ENCODE measurements at regions of chr18 and their contacts with region 1.

Region 1: GRCh38 chr18:3593904-3594661 is 144.1 kb downstream of the TGIF1 start:
- DNase-seq: peak; percentile 92
- ATAC-seq: peak; percentile 86
- H3K4me3 Mint-ChIP-seq: peak overlapping the region; percentile 82
- H3K27ac Mint-ChIP-seq: peak overlapping the region; percentile 94
- H3K4me1 Mint-ChIP-seq: peaks cover 35% of the 10 kb centered on the region
- H3K27me3 Mint-ChIP-seq: no peaks in the 10 kb centered on the region

Region 2: DNA sequence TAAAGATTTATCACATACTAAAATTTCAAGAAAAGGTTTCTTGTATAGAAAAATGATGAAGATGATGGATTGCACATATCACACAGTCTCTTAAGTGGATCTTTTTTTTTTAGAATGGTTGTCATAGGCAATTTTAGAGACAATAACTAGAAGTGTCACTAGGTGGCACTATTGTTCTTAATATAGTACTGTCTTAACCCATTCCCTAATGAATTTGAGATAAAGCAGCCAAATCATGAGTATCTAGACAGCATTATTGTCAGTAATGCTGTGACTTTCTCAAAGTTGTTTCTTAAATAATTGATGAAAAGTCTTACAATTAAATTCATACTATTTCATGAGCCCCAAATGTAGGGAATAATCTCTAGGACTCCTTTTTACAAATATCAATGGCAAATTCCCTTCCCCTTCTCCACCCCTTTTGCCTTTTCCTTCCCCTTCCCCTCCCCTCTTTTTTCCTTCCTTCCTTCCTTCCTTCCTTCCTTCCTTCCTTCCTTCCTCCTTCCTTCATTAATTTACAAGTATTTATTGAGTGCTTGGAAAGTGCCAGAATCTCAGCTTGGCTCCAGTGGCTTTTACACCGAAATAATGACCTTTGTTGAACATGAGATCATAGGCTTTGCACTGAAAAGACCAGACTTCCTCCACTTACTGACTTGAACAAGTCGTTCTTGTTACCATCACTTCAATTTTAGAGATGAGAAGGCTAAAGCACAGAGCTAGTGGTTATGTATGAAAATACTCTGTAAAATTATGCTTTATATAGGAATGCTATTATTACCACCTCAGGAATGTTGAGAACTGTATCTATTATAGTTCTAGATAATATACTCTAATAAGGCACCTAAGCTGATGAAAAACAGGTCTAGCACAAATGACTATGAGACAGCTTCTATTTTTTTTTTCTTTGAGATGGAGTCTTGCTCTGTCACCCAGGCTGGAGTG is 312.4 kb before region 1 on chr18:
- CTCF ChIA-PET with region 1: interaction called, 13 read pairs
- DNase-seq: no peak
- ATAC-seq: peak; percentile 87
- H3K4me3 Mint-ChIP-seq: no peak overlapping the region
- H3K27ac Mint-ChIP-seq: no peak overlapping the region
- H3K4me1 Mint-ChIP-seq: no peaks in the 10 kb centered on the region
- H3K27me3 Mint-ChIP-seq: peaks cover 2% of the 10 kb centered on the region

Region 3: GRCh38 chr18:3447895-3448837 is 145.9 kb before region 1 on chr18:
- CTCF ChIA-PET with region 1: interaction called, 22 read pairs
- DNase-seq: peak; percentile 91
- ATAC-seq: peak; percentile 68
- H3K4me3 Mint-ChIP-seq: peak overlapping the region; percentile 87
- H3K27ac Mint-ChIP-seq: peak overlapping the region; percentile 97
- H3K4me1 Mint-ChIP-seq: peaks cover 31% of the 10 kb centered on the region
- H3K27me3 Mint-ChIP-seq: no peaks in the 10 kb centered on the region

Region 4: GRCh38 chr18:3454365-3455089 is 139.6 kb before region 1 on chr18:
- CTCF ChIA-PET with region 1: interaction called, 29 read pairs
- DNase-seq: peak; percentile 63
- ATAC-seq: no peak
- H3K4me3 Mint-ChIP-seq: peak overlapping the region; percentile 87
- H3K27ac Mint-ChIP-seq: peak overlapping the region; percentile 83
- H3K4me1 Mint-ChIP-seq: peaks cover 55% of the 10 kb centered on the region
- H3K27me3 Mint-ChIP-seq: no peaks in the 10 kb centered on the region

Region 5: GRCh38 chr18:3541549-3542386 is 52.3 kb before region 1 on chr18:
- CTCF ChIA-PET with region 1: no interaction called
- DNase-seq: no peak
- ATAC-seq: peak; percentile 30
- H3K4me3 Mint-ChIP-seq: no peak overlapping the region
- H3K27ac Mint-ChIP-seq: no peak overlapping the region
- H3K4me1 Mint-ChIP-seq: peaks cover 2% of the 10 kb centered on the region
- H3K27me3 Mint-ChIP-seq: peaks cover 14% of the 10 kb centered on the region

Region 6: DNA sequence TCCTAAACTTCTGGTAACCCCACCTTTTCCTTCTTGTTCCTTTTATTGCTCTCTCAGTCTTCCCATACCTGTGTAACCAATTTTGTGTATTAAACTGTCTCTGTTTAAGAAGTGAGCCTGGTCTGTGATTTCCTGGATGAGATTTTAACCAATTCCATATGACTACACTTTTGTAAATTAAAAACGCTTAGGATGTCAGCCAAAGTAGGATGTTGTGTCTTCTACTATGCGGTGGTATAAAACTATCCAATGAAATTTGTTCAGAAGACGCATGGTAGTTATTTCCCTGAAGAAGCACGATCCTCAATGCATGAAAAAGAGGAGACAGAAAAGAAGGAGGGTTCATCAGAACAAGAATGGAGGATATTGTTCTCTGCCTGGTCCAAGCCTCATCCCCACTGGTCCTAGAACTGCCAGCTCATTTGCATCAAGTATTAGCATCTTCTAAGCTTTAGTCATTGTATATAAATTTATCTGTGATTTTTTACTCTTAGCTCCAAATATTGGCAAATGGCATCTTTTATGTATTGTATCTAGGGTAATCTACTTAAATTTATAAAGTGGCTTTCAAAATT is 16.7 kb before region 1 on chr18:
- CTCF ChIA-PET with region 1: no interaction called
- DNase-seq: no peak
- ATAC-seq: no peak
- H3K4me3 Mint-ChIP-seq: no peak overlapping the region
- H3K27ac Mint-ChIP-seq: no peak overlapping the region
- H3K4me1 Mint-ChIP-seq: no peaks in the 10 kb centered on the region
- H3K27me3 Mint-ChIP-seq: no peaks in the 10 kb centered on the region

Region 7: DNA sequence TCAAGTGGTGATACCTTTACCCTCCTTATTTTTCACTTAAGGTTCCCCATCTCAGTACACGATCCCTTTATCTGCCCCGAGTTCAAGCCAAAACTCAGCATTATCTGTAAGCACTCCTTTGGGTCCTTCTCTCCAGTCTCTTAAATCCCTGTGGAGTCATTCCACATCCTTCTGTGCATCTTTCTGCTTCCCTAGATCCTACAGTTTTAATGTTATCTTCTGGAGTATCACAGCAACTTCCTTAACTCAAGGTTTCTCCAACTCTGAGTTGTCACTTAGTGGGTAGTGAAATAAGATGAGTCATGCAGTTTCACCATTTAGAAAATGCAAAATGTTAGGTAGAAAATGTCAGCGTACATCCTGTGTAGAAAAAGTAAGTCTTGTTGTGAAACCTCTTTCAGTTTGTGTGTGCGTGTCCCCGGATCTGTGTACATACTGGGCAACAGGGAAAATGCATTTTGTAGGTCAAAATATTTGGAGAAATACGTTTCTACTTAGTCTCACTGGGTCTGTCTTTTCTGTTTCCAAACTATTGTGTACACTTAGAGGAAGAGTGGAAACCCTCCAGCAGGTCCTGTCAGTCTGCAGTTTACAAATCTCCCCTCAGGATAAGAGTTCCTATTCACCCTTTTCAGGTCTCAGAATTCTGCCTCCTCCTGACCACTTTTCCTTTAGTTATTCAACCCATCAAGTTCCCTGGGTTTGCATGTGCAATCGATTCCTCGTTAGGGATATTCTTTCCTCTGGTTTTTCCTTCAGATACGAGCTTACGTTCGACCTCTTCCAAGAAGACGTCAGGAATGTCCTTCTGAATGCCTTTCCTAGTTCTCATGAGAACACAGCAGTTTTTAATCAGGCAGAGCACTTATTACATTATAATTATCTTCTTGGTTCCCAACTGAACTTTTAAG is 10.7 kb after region 1 on chr18:
- CTCF ChIA-PET with region 1: interaction called, 35 read pairs
- DNase-seq: peak; percentile 64
- ATAC-seq: peak; percentile 75
- H3K4me3 Mint-ChIP-seq: no peak overlapping the region
- H3K27ac Mint-ChIP-seq: no peak overlapping the region
- H3K4me1 Mint-ChIP-seq: peaks cover 13% of the 10 kb centered on the region
- H3K27me3 Mint-ChIP-seq: no peaks in the 10 kb centered on the region

Region 8: GRCh38 chr18:3679241-3679640 is 85.2 kb after region 1 on chr18:
- CTCF ChIA-PET with region 1: no interaction called
- DNase-seq: no peak
- ATAC-seq: no peak
- H3K4me3 Mint-ChIP-seq: no peak overlapping the region
- H3K27ac Mint-ChIP-seq: no peak overlapping the region
- H3K4me1 Mint-ChIP-seq: no peaks in the 10 kb centered on the region
- H3K27me3 Mint-ChIP-seq: peaks cover 17% of the 10 kb centered on the region

Measured in activated CD8-positive, alpha-beta memory T cell treated with anti-CD3 and anti-CD28 coated beads, Interleukin-2, amount 10 ng/mL, durations not matched to agents 7 days and 5 days (primary cell).